ENCODE measurements at regions of chr16 and their contacts with region 1.

Region 1: DNA sequence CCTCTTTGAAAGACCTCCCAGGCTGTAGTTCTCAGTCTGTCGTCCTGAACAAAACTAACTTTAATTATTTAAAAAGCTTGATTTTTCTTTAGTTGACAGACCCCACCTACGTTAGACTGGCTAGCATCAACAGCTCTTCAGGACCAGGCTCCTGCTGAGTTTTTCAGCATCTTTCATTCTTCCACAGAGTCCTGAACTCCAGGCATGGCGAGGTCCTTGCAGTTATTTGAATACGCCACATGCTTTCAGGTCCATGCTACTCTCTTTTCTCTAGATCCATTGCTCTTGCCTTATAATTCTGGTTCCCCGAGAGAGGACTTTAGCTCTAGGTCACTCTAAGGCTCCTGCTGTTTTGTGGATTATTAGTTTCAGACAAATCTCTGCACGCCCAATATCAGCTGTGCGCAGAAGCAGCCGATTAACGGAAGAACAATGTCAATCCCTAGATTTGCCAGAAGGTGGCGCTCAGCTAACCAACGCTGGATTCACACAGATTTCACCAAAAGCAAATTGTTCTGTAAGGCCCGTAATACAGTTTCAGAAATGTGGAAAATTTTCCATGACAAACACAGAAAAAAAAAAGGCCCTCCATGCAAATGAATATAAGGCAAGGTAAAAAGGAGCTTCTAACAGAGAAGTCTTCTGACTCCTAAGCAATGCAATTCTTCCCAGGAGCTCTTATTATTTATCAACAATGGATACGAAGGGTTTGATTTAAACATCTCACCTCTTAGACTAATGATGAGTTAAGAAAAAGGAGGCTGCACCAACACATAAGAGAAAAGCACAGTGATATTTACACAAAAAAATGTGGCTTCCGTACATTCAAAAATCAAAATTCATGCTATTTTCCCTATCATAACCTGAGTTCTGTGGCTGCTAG is 33.5 kb upstream of the BCO1 start:
- DNase-seq: peak; percentile 30
- ATAC-seq: peak; percentile 56; the same call in 1 of the 2 replicates
- H3K4me3 ChIP-seq: no peak overlapping the region
- H3K27ac ChIP-seq: no peak overlapping the region
- H3K4me1 ChIP-seq: no peaks in the 10 kb centered on the region
- H3K27me3 ChIP-seq: no peaks in the 10 kb centered on the region
- CTCF ChIP-seq: peak; percentile 88

Region 2: DNA sequence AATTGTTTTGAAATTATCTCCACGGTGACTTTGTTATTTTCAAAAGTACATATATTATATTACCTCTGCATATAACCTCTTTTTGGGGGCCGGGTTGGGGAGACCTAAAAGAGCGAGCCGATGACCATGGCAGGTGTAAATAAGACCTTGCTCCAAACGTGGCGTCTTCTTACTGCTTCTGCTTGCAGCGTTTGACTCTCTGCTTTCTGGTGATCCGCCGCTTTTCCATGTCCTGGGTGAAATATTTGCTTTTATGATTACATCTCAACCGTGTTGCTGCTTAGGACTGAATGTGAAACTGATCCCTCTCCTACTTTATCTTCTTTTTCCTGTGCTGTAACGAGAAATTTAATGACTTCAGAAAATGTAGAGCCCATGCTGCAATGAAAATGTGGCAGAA is 151.3 kb before region 1 on chr16:
- CTCF ChIA-PET with region 1: interaction called, 11 read pairs
- POLR2A ChIA-PET with region 1: no interaction called
- in situ Hi-C with region 1: no loop called
- intact Hi-C with region 1: no loop called
- DNase-seq: no peak
- ATAC-seq: no peak
- H3K4me3 ChIP-seq: no peak overlapping the region
- H3K27ac ChIP-seq: no peak overlapping the region
- H3K4me1 ChIP-seq: no peaks in the 10 kb centered on the region
- H3K27me3 ChIP-seq: no peaks in the 10 kb centered on the region
- CTCF ChIP-seq: no peak

Region 3: DNA sequence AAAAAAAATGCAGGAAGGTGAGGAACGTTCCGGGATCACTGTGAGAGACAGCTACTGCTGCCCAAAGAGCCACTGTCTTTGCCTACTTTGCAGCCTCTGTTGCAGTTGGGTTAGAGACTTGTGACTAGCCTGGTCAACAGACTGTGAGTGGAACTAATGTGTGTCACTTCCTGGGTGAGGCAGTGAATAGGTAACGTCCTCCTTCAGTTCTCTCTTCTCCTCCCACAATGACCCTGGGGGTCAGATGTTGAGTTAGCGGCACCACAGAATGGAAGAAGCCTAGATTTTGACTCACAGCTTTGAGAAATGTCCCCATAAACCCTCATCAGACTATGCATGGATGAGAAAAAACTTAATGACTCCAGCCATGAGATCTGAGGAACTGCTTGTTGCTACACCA is 133.2 kb before region 1 on chr16:
- CTCF ChIA-PET with region 1: no interaction called
- POLR2A ChIA-PET with region 1: no interaction called
- in situ Hi-C with region 1: no loop called
- intact Hi-C with region 1: no loop called
- DNase-seq: peak; percentile 60
- ATAC-seq: no peak
- H3K4me3 ChIP-seq: no peak overlapping the region
- H3K27ac ChIP-seq: no peak overlapping the region
- H3K4me1 ChIP-seq: no peaks in the 10 kb centered on the region; the same call in 1 of the 2 replicates
- H3K27me3 ChIP-seq: no peaks in the 10 kb centered on the region
- CTCF ChIP-seq: no peak

Measured in Panc1 (cell line).